HCT116 (cell line): ENCODE measurements at regions of chr19 and their contacts with region 1.

Region 1: GRCh38 chr19:19554074-19555023 is 16.3 kb downstream of the CILP2 start:
- DNase-seq: no peak
- ATAC-seq: peak; percentile 83
- H3K4me3 ChIP-seq: no peak overlapping the region
- H3K27ac ChIP-seq: no peak overlapping the region
- H3K4me1 ChIP-seq: no peaks in the 10 kb centered on the region
- H3K27me3 ChIP-seq: no peaks in the 10 kb centered on the region
- CTCF ChIP-seq: peak; percentile 43 to 91 (median 83); a peak in 5 of 6 replicates
- POLR2A ChIP-seq: no peak
- RAD21 ChIP-seq: peak; percentile 60

Region 2: GRCh38 chr19:19531951-19532805 is 22.2 kb before region 1 on chr19:
- CTCF ChIA-PET with region 1: interaction called, 22 read pairs
- POLR2A ChIA-PET with region 1: no interaction called
- RAD21 ChIA-PET with region 1: interaction called, 4 to 5 read pairs
- intact Hi-C with region 1: no loop called
- DNase-seq: no peak
- ATAC-seq: peak; percentile 83
- H3K4me3 ChIP-seq: no peak overlapping the region
- H3K27ac ChIP-seq: no peak overlapping the region
- H3K4me1 ChIP-seq: no peaks in the 10 kb centered on the region; a peak in 1 of 4 replicates
- H3K27me3 ChIP-seq: no peaks in the 10 kb centered on the region
- CTCF ChIP-seq: peak; percentile 80 to 97 (median 90)
- POLR2A ChIP-seq: no peak
- RAD21 ChIP-seq: peak; percentile 91

Region 3: GRCh38 chr19:19540715-19541440 is 13.5 kb before region 1 on chr19:
- CTCF ChIA-PET with region 1: interaction called, 52 read pairs
- POLR2A ChIA-PET with region 1: interaction called, 3 read pairs
- RAD21 ChIA-PET with region 1: interaction called in 1 of 2 experiments, 4 read pairs
- intact Hi-C with region 1: no loop called
- DNase-seq: peak; percentile 93
- ATAC-seq: peak; percentile 95
- H3K4me3 ChIP-seq: peak overlapping the region; percentile 53 to 64
- H3K27ac ChIP-seq: peak overlapping the region; percentile 67; the same call in 1 of the 2 replicates
- H3K4me1 ChIP-seq: peaks cover 12 to 34% of the 10 kb centered on the region in 2 experiments
- H3K27me3 ChIP-seq: no peaks in the 10 kb centered on the region
- CTCF ChIP-seq: no peak; a peak in 1 of 6 replicates
- POLR2A ChIP-seq: no peak
- RAD21 ChIP-seq: no peak

Region 4: DNA sequence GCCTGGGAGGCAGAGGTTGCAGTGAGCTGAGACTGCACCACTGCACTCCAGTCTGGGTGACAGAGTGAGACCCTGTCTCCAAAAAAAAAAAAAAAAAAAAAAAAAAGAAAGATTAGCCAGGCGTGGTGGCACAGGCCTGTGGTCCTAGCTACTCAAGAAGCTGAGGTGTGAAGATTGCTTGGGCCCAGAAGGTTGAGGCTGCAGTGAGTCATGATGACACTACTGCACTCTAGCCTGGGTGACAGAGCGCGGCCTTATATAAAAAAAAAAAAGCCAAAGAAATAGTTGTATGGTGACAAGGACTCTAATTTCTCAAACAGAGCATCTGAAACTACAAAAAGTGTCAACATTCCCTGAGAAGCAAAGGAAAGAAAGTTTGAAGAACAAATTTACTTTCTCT is 60.7 kb after region 1 on chr19:
- CTCF ChIA-PET with region 1: interaction called, 10 read pairs
- POLR2A ChIA-PET with region 1: no interaction called
- RAD21 ChIA-PET with region 1: no interaction called
- intact Hi-C with region 1: no loop called
- DNase-seq: peak; percentile 66
- ATAC-seq: no peak
- H3K4me3 ChIP-seq: no peak overlapping the region
- H3K27ac ChIP-seq: peak overlapping the region; percentile 42
- H3K4me1 ChIP-seq: peaks cover 59 to 81% of the 10 kb centered on the region in 2 experiments
- H3K27me3 ChIP-seq: no peaks in the 10 kb centered on the region
- CTCF ChIP-seq: no peak
- POLR2A ChIP-seq: no peak
- RAD21 ChIP-seq: no peak